OCI-LY7 (cell line): ENCODE measurements at regions of chr14 and their contacts with region 1.

Region 1: GRCh38 chr14:95157327-95158189 is at the start of gene DICER1:
- DNase-seq: peak; percentile 92
- H3K4me3 ChIP-seq: peak within 1 kb of the TSS; percentile 78
- H3K27ac ChIP-seq: peak within 1 kb of the TSS; percentile 73
- H3K4me1 ChIP-seq: peaks cover 34% of the 10 kb centered on the region
- CTCF ChIP-seq: no peak
- total RNA-seq, gene DICER1: 60.3 and 84.9 TPM in 2 replicates

Region 2: DNA sequence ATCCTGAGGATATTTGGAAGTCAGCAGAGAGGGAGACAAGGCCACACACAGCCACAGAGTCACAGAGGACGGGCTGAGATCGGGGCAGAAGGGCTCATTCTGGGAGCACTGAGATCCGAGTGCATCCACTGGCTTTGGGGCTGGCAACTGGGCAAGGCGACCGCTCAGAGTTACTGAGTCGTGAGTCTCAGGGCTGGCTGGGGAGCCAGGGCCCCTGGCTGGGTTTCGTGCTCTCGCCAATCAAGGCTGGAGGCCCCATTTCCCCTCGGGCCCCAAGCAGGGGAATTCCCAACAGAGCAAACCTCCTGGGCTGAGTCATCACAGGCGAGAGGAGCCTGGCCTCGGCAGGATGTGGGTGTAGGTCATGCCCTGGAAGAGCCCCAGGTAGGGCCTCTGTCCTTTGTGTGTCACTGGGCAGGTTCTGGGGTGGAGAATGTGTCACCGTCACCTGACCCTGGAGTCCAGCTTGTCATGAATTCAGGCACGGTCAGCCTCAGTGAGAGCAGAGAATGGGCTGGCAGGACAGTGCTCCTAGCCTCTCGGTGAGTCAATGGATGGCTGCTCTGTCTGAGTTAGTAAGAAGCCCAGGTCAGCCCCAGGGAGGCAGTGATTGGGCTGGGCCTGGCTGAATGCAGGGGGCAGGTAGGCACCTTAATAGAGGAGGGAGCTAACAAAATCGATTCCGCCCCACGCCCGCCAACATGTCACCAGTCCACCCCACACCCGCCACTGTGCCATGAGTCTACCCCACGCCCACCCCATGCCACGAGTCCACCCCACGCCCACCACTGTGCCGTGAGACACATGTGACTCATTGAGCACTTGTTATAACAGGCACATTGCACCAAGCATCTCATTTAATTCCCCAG is 1198.1 kb before region 1 on chr14:
- CTCF ChIA-PET with region 1: no interaction called
- POLR2A ChIA-PET with region 1: no interaction called
- intact Hi-C with region 1: loop called (anchors 10 kb)
- DNase-seq: peak; percentile 87
- H3K4me3 ChIP-seq: peak overlapping the region; percentile 51
- H3K27ac ChIP-seq: peak overlapping the region; percentile 92
- H3K4me1 ChIP-seq: peaks cover 99% of the 10 kb centered on the region
- CTCF ChIP-seq: no peak

Region 3: GRCh38 chr14:95143808-95144620 is 13.5 kb before region 1 on chr14:
- CTCF ChIA-PET with region 1: no interaction called
- POLR2A ChIA-PET with region 1: interaction called, 7 read pairs
- intact Hi-C with region 1: loop called (anchors 1 kb)
- DNase-seq: peak; percentile 38
- H3K4me3 ChIP-seq: peak overlapping the region; percentile 12
- H3K27ac ChIP-seq: peak overlapping the region; percentile 18
- H3K4me1 ChIP-seq: peaks cover 56% of the 10 kb centered on the region
- CTCF ChIP-seq: no peak

Region 4: GRCh38 chr14:95265106-95266094 is 107.8 kb after region 1 on chr14:
- CTCF ChIA-PET with region 1: no interaction called
- POLR2A ChIA-PET with region 1: no interaction called
- intact Hi-C with region 1: loop called (anchors 10 kb)
- DNase-seq: peak; percentile 90
- H3K4me3 ChIP-seq: peak overlapping the region; percentile 52
- H3K27ac ChIP-seq: peak overlapping the region; percentile 84
- H3K4me1 ChIP-seq: peaks cover 62% of the 10 kb centered on the region
- CTCF ChIP-seq: no peak

Region 5: DNA sequence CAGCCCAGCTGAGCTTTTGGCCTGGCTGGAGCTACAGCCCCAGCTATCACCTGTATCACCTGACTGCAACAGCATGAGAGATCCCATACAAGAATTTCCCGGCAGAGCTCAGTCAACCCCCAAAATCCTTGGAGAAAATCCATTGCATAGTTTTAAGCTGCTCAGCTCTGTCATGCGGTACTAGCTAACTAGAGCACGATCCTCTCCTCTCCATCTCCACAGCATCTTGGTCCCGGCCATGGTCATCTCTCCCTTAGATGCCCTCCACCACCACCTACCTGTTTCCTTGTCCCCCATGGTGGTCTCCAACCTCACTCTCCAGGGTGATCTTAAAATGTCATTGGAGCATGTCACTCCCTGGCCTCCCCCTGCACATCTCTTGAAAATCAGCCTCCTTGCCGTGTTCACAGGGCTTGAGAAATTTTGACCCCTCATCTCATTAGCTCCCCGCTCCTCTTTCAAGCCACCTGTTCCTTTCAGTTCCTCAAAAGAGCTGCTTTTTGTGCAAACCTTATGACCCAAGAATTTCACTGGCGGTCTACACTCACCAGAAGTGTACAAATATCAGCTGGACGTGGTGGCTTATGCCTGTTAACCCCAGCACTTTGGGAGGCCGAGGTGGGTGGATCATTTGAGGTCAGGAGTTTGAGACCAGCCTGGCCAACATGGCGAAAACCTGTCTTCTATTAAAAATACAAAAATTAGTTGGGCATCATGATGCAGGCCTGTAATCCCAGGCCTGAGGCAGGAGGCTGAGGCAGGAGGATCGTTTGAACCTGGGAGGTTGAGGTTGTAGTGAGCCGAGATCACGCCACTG is 170.2 kb after region 1 on chr14:
- CTCF ChIA-PET with region 1: no interaction called
- POLR2A ChIA-PET with region 1: interaction called, 3 read pairs
- intact Hi-C with region 1: loop called (anchors 1 kb)
- DNase-seq: peak; percentile 98
- H3K4me3 ChIP-seq: peak overlapping the region; percentile 45
- H3K27ac ChIP-seq: peak overlapping the region; percentile 69
- H3K4me1 ChIP-seq: peaks cover 47% of the 10 kb centered on the region
- CTCF ChIP-seq: no peak